CD4-positive, alpha-beta T cell (primary cell): ENCODE measurements at regions of chr20 and their contacts with region 1.

Region 1: DNA sequence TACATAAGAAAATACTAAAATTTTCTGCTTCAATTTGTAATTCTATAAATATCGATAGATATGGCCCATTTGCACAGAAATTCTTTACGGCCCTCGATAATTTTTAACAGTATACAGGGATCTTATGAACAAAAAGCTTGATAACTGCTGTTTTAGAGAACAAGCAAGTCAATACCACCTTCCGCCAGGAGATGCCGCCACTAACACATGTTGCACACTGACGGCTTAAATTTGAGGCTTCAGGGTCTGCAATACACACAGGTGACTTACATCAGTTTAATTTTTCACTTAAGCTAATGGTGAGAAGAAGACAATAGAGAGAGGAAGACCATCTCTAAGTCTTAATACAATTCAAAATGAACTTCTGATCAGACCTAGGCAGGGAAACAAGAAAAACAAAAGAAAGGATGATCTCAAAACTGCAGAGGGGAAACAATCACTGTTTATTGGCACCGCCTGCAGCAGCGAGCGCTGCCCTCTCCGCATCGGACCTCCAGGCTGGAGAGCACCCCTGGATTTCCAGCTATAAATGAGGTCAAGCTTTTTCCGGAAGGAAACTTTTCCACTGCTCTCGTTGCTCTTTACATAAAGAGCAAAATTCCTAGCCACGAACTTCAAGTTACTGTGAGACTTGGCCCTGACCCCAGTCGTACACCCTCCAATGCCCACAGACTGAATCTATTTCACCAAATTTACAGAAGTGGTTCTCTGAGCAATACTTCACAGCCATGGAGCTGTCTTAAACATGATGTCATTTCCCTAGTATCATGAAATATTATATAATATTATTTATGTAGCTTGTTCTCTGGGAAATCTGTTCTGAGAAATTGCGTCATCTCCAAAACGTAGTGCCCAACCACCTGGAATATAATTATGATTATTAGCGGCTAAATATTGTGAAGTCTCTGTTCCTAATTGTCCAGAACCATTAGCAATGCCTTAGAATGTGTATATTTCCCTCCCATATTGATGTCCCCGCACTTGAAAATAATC is 54.1 kb downstream of the OTOR start:
- DNase-seq: peak; percentile 16 to 61 (median 32)
- ATAC-seq: no peak
- H3K4me3 ChIP-seq: no peak overlapping the region
- H3K4me3 Mint-ChIP-seq: no peak overlapping the region
- H3K27ac ChIP-seq: no peak overlapping the region
- H3K27ac Mint-ChIP-seq: no peak overlapping the region
- H3K4me1 ChIP-seq: no peaks in the 10 kb centered on the region
- H3K4me1 Mint-ChIP-seq: no peaks in the 10 kb centered on the region
- H3K27me3 ChIP-seq: peaks cover 16 to 19% of the 10 kb centered on the region in 2 experiments
- H3K27me3 Mint-ChIP-seq: peaks cover 75% of the 10 kb centered on the region
- CTCF ChIP-seq: peak; percentile 89

Region 2: DNA sequence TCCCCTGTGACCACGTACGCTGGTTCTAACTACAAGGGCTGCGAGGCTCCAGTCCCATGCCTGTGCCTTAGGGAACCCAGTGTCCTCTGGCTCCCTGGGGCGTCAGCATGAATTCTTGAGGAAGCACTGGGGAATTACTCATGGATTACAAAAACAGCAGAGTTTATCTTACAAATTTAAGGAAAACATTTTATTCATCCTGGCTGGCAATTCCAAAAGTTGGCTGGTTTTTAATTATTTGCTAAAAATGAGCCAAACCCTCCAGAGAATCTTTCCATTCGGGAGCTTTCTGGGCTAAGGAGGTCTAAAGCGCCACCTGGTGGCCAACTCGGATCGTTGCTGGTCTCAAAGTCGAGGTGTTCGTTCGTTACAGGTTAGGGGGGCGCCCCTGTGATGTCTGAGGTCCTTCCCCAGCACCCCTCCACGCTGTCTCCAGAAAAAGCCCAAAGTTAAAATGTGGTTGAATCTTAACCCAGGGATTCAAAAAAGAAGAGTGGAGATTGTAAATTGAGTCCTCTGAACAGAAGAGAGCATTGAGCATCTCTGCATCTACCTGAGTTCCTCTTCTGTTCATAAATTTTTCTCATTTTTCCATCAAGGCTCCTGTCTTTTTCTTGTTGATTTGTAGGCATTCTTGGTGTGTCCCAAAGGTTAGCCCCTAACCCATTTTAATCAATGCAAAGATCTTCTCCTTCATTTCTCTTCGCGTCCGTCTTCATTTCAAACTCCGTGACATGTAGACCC is 629.6 kb after region 1 on chr20:
- CTCF ChIA-PET with region 1: interaction called, 3 read pairs
- POLR2A ChIA-PET with region 1: no interaction called
- intact Hi-C with region 1: loop called in 1 of 2 experiments (anchors 2 kb)
- DNase-seq: peak in 13 of 14 experiments; percentile 7 to 67 (median 27)
- ATAC-seq: no peak
- H3K4me3 ChIP-seq: no peak overlapping the region
- H3K4me3 Mint-ChIP-seq: no peak overlapping the region
- H3K27ac ChIP-seq: no peak overlapping the region
- H3K27ac Mint-ChIP-seq: no peak overlapping the region
- H3K4me1 ChIP-seq: no peaks in the 10 kb centered on the region
- H3K4me1 Mint-ChIP-seq: no peaks in the 10 kb centered on the region
- H3K27me3 ChIP-seq: peaks cover 0 to 7% of the 10 kb centered on the region in 2 experiments
- H3K27me3 Mint-ChIP-seq: peaks cover 23% of the 10 kb centered on the region
- CTCF ChIP-seq: peak; percentile 81

Region 3: DNA sequence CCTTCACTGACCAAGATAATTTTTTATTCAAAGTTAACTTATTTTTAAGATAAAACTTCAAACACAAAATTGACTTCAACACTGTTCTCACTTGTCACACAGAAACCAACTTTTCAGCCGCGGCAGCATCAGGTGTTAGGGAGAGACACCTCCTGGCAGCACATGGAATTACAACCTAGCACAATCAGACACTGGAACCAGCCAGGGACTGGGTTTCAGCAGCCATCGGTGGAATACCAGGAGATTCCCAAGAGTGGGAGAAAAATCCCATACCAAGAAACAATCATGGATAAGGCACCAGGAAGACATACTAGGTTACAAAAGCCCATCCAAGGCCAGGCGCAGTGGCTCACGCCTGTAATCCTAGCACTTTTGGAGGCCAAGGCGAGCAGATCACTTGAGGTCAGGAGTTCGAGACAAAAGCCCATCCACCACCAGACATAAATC is 1096.4 kb after region 1 on chr20:
- CTCF ChIA-PET with region 1: no interaction called
- POLR2A ChIA-PET with region 1: no interaction called
- intact Hi-C with region 1: loop called in 1 of 2 experiments (anchors 10 kb)
- DNase-seq: peak; percentile 39 to 80 (median 54)
- ATAC-seq: peak; percentile 89
- H3K4me3 ChIP-seq: no peak overlapping the region
- H3K4me3 Mint-ChIP-seq: no peak overlapping the region
- H3K27ac ChIP-seq: no peak overlapping the region
- H3K27ac Mint-ChIP-seq: no peak overlapping the region
- H3K4me1 ChIP-seq: peaks cover 10% of the 10 kb centered on the region
- H3K4me1 Mint-ChIP-seq: peaks cover 11% of the 10 kb centered on the region
- H3K27me3 ChIP-seq: peaks cover 0 to 10% of the 10 kb centered on the region in 2 experiments
- H3K27me3 Mint-ChIP-seq: peaks cover 27% of the 10 kb centered on the region
- CTCF ChIP-seq: peak; percentile 95

Region 4: DNA sequence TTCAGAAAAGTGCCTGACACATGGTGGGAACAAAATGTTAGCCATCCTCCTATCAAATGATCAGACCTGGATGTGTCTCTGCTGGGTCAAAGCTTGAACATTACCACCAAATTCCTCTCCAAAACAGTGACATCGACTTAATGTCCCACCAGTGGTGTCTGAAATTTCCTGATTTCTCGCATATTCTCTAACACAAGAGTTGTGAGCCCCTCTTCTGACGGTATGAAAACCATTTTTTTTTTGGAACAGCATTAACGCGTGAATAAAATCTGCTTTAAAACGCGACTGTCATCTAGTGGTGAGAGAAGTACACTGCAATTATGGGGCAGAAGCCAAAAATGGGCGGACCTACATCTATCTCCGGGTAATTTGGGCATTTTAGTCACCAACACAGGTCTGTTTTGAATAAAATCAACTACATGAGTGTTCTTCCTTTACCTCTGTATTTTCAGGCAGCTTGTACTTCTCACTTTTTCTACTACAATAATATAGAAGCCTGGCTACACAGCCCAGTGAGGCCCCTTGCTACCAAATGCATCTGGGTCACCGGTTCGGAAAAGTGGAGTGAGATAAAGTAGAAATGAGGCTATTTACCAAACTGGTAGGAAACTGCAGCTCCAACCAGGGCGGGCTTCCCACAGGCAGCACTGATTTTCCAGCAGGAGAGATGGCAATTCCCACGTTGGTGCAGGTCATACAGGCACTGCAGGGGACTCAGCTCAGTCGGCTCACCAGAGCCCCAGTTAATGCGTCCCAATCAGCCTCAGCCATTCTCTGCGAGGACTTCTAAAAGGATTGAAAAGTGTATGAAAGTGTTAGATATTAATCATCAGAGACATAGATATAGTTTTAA is 1194.0 kb after region 1 on chr20:
- CTCF ChIA-PET with region 1: no interaction called
- POLR2A ChIA-PET with region 1: no interaction called
- intact Hi-C with region 1: loop called in 1 of 2 experiments (anchors 10 kb)
- DNase-seq: peak in 11 of 14 experiments; percentile 8 to 80 (median 22)
- ATAC-seq: peak; percentile 97
- H3K4me3 ChIP-seq: no peak overlapping the region
- H3K4me3 Mint-ChIP-seq: no peak overlapping the region
- H3K27ac ChIP-seq: no peak overlapping the region
- H3K27ac Mint-ChIP-seq: no peak overlapping the region
- H3K4me1 ChIP-seq: peaks cover 7% of the 10 kb centered on the region
- H3K4me1 Mint-ChIP-seq: peaks cover 22% of the 10 kb centered on the region
- H3K27me3 ChIP-seq: peaks cover 0 to 2% of the 10 kb centered on the region in 2 experiments
- H3K27me3 Mint-ChIP-seq: no peaks in the 10 kb centered on the region
- CTCF ChIP-seq: peak; percentile 88

Region 5: DNA sequence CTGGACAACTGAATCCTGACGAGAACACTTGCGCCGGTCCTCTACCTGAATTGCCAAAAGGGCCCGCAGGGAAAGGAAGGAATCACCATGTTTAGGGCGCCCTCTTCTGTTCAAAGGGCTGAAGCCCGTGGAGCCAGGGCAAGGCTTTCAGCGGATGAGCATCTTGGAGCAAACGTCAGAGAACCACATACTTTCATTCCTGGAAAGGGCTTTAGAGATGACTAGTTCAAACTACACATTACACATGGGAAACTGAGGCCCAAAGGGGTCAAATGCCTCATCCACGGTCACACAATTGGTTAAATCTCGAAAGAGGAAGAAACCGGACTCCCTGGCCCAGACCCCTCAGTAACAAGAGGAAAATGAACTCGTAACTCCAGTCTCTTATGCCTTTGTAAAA is 1474.6 kb after region 1 on chr20:
- CTCF ChIA-PET with region 1: no interaction called
- POLR2A ChIA-PET with region 1: no interaction called
- intact Hi-C with region 1: loop called (anchors 5 to 10 kb)
- DNase-seq: peak; percentile 7 to 72 (median 29)
- ATAC-seq: peak; percentile 73
- H3K4me3 ChIP-seq: no peak overlapping the region
- H3K4me3 Mint-ChIP-seq: no peak overlapping the region
- H3K27ac ChIP-seq: no peak overlapping the region
- H3K27ac Mint-ChIP-seq: no peak overlapping the region
- H3K4me1 ChIP-seq: peaks cover 5% of the 10 kb centered on the region
- H3K4me1 Mint-ChIP-seq: no peaks in the 10 kb centered on the region
- H3K27me3 ChIP-seq: peaks cover 9 to 24% of the 10 kb centered on the region in 2 experiments
- H3K27me3 Mint-ChIP-seq: peaks cover 73% of the 10 kb centered on the region
- CTCF ChIP-seq: peak; percentile 74